A673 (cell line): ENCODE measurements at regions of chr1 and their contacts with region 1.

Region 1: GRCh38 chr1:6245086-6245868 is 1.3 kb downstream of the HES3 start:
- DNase-seq: peak; percentile 88
- H3K4me3 ChIP-seq: peak overlapping the region; percentile 46
- H3K27ac ChIP-seq: no peak overlapping the region
- H3K4me1 ChIP-seq: peaks cover 26% of the 10 kb centered on the region
- H3K27me3 ChIP-seq: peaks cover 56% of the 10 kb centered on the region
- CTCF ChIP-seq: peak; percentile 79

Region 2: DNA sequence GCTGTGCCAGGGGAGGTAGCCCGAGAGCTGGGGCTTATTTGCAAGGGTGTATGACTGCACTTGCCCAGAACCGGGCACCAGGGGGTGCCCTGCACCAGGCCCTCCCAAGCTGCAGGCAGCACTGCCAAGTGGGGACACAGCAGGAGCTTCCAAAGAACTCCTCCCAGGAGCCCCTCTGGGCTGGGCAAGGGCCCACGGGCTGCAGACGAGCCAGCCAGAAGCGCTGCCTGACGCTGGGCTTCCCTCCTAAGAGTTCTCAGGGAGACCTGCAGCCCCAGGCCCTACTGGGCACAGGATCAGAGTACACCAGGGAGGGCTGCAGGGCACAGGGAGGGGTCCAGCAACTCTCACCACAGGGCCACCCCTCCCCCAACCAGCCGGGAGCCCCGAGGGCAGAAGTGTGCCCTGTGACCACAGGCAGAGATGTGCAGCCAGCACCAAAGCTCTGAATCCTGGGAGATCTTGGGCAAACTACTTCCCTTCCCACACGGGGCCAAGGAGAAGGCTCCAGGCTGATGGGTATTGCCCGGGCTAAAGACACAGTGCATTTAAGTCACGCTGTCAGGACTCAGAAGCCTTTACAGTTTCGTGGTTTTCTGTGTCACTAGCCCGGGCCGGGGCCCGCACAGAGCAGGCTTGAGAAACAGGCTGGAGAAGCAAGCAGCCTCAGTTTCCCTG is 136.2 kb before region 1 on chr1:
- CTCF ChIA-PET with region 1: interaction called, 9 read pairs
- POLR2A ChIA-PET with region 1: no interaction called
- intact Hi-C with region 1: loop called (anchors 2 kb)
- DNase-seq: peak; percentile 77
- H3K4me3 ChIP-seq: no peak overlapping the region
- H3K27ac ChIP-seq: no peak overlapping the region
- H3K4me1 ChIP-seq: no peaks in the 10 kb centered on the region
- H3K27me3 ChIP-seq: no peaks in the 10 kb centered on the region
- CTCF ChIP-seq: peak; percentile 66

Region 3: DNA sequence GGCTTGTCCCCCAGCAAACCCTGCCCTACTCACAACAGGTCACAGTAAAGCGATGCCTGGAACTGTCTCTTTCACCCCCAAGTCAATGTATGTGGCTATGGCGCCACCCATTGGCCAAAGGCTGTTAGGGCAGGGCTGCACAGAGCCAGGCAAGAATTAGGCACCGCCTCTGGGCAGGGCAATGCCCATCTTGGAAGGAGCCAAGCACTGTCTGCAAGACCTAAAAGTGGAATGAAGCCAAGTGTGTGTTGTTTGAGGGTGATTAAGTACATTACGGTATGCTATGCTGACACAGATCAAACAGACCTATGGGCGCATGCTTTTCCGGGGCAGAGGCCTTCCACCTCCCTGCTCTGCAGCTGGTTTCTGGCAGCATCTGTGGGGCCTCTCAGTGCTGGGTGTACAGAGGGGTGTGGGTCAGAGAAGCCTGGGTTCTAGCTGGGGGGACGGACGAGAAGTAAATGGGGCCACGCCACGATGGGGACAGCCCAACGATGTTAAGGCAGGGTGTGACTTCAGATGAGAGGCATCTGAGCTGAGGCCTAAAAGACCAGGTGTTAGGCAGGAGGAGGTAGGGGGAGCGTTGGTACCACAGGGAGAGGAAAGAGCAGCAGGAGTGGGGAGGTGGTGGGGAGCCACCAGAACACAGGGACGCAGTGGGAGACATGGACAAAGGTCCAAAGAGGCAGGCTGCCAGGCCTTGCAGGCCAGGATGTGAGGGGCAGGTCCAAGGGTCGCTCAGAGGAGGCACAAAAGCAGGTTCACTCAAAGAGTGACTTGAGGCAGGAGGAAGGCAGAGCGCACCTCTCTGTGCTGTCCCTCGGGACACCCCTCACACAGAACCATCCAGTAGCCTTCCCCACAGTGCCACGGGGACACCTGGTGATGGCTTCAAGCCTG is 98.5 kb after region 1 on chr1:
- CTCF ChIA-PET with region 1: interaction called, 16 read pairs
- POLR2A ChIA-PET with region 1: no interaction called
- intact Hi-C with region 1: loop called (anchors 1 kb)
- DNase-seq: peak; percentile 87
- H3K4me3 ChIP-seq: no peak overlapping the region
- H3K27ac ChIP-seq: no peak overlapping the region
- H3K4me1 ChIP-seq: no peaks in the 10 kb centered on the region
- H3K27me3 ChIP-seq: no peaks in the 10 kb centered on the region
- CTCF ChIP-seq: peak; percentile 97

Region 4: DNA sequence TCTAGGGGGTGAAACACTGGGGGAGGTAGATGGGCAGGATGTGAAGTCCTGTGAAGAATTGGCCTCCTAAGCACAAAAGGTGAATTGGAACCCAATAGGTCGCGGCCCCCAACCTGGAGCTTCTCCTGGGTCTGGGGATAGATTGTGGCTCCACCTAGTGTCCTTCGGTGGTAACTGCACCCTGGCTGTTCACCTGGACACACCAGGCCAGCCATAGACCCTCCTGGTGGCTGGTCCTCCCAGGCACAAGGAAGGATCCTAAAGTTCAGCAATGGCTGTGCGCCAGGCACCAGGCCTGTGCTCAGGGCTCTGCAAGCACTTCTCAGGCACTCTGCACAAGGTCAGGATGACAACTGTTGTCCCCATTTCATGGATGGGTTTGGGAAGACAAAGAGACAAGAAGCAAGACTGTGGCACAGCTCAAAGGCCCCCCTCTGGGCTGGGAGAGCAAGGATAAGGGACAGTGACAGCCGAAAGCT is 192.8 kb after region 1 on chr1:
- CTCF ChIA-PET with region 1: interaction called, 16 read pairs
- POLR2A ChIA-PET with region 1: no interaction called
- intact Hi-C with region 1: no loop called
- DNase-seq: peak; percentile 62
- H3K4me3 ChIP-seq: no peak overlapping the region
- H3K27ac ChIP-seq: no peak overlapping the region
- H3K4me1 ChIP-seq: no peaks in the 10 kb centered on the region
- H3K27me3 ChIP-seq: no peaks in the 10 kb centered on the region
- CTCF ChIP-seq: peak; percentile 82